Left lung (tissue), 14 donors: ENCODE measurements at regions of chr14 and their contacts with region 1.

Region 1: DNA sequence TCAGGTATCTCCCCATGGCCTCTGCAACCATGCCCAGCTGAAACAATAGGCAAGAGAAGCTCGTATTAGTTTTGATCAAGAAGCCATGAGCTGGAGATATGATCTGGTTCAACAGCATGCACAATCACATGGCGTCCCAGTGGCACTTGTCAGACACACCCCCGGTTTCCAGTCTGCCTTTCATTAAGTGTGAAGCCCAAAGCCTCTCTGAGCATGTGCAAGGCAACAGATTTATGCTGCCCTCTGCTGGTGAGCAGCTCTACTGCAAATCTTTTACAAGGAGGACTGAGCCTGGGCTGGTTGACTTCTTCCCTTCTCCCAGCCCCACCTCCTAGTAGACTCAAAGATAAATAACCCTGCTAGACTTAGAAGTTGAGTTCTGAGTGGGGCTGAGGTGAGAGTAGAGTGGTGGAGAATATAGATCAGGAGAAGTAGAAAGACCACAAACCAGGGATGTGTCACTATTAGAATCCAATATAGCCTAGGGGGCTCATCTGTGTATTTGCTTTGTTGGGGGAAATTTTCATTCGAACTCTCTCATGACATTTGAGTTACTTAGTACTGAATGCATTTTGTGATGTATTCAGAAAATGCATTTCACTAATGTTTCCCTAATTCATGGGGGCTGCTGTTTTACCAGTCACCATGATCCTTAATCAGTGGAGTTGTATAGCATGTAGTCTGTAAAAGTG is 53.7 kb upstream of the MBIP start:
- DNase-seq: peak; percentile 41 to 82 (median 68)
- ATAC-seq: peak; percentile 100
- H3K4me3 ChIP-seq: no peak overlapping the region
- H3K27ac ChIP-seq: no peak overlapping the region
- H3K4me1 ChIP-seq: no peaks in the 10 kb centered on the region
- H3K27me3 ChIP-seq: no peaks in the 10 kb centered on the region
- CTCF ChIP-seq: peak; percentile 72 to 85

Region 2: GRCh38 chr14:35883677-35884293 is 490.3 kb before region 1 on chr14:
- intact Hi-C with region 1: loop called in 1 of 2 experiments (anchors 10 kb)
- DNase-seq: peak in 2 of 4 donors; percentile 29 to 35
- ATAC-seq: peak; percentile 81
- H3K4me3 ChIP-seq: no peak overlapping the region
- H3K27ac ChIP-seq: no peak overlapping the region
- H3K4me1 ChIP-seq: peaks cover 5 to 6% of the 10 kb centered on the region in 2 donors
- H3K27me3 ChIP-seq: no peaks in the 10 kb centered on the region
- CTCF ChIP-seq: peak; percentile 41 to 56

Region 3: DNA sequence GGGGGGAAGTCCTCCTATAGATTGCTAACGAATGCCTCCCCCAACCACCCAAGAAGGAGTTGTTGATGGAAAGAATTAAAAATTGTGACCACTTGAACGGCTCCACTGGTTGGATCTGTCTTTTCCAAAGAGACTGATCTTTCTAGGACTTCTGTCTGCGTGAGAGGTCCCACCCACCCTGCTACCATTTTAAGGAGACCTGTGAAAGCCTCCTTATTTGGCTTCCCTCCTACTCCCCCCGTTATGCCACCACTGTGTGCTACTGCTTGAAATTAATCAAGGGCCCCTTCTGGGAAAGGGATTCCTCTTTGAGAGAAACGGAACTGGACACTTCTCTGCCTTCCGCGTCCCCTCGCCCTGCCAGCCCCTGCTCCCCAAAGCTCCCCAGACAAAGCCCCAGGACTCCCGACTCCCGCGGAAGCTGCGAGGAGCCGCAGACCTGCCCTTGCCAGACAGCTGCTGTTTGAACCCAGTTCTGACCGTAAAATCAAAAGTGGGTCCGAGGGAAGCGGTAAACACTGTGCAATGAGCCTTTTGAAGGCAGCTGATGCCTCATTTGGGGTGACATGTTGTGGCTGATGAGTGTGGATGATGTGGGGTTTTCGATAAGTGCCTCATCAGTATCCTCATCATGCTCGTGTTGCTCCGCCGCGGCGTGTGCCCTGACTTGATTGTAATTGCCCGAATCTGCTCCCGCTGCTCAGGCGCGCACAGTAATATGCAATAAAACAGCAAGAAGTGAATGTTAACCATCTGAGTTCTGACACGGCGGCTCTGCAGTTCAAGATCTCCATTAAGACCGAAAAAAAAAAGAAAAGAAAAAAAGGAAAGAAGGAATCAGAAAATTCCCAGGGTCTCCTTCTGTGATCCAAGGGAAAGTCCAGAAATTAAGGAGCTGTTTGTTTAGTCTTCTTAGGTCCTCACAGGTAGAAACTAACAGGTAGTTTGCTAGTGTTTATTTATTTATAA is 101.9 kb before region 1 on chr14:
- intact Hi-C with region 1: no loop called
- DNase-seq: peak in 2 of 4 donors; percentile 16 to 74
- ATAC-seq: peak; percentile 62
- H3K4me3 ChIP-seq: peak overlapping the region; percentile 23 to 29
- H3K27ac ChIP-seq: peak overlapping the region; percentile 30 to 60
- H3K4me1 ChIP-seq: peaks cover 0 to 3% of the 10 kb centered on the region in 2 donors
- H3K27me3 ChIP-seq: peaks cover 14 to 59% of the 10 kb centered on the region in 2 donors
- CTCF ChIP-seq: no peak

Region 4: GRCh38 chr14:36300337-36300736 is 73.8 kb before region 1 on chr14:
- intact Hi-C with region 1: no loop called
- DNase-seq: no peak
- ATAC-seq: peak; percentile 64
- H3K4me3 ChIP-seq: no peak overlapping the region
- H3K27ac ChIP-seq: no peak overlapping the region
- H3K4me1 ChIP-seq: peaks cover 0 to 5% of the 10 kb centered on the region in 2 donors
- H3K27me3 ChIP-seq: no peaks in the 10 kb centered on the region
- CTCF ChIP-seq: no peak

Region 5: GRCh38 chr14:36757734-36758601 is 383.8 kb after region 1 on chr14:
- intact Hi-C with region 1: no loop called
- DNase-seq: no peak
- ATAC-seq: no peak
- H3K4me3 ChIP-seq: no peak overlapping the region
- H3K27ac ChIP-seq: no peak overlapping the region
- H3K4me1 ChIP-seq: no peaks in the 10 kb centered on the region
- H3K27me3 ChIP-seq: no peaks in the 10 kb centered on the region
- CTCF ChIP-seq: no peak